Heart left ventricle (tissue), 16 donors: ENCODE measurements at regions of chr11 and their contacts with region 1.

Region 1: DNA sequence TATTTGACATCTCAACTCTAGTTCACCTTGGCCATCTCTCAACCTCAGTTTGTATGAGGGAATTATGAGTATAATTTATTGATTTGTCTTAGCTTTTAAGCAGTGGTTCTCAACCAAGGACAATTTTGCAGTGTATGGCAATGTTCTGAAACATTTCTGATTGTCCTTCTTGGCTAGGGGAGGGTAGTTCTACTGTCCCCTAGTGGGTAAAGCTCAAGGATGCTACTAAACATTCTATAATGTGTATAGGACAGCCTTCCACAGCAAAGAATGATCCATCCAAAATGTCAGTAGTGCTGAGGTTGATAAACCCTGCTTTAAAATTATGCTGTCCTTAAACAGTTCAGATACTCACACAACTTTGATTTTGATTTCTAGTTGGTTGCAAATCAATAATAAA is 78.1 kb upstream of the ALKBH3 start:
- DNase-seq: no peak
- ATAC-seq: no peak
- H3K4me3 ChIP-seq: no peak overlapping the region
- H3K27ac ChIP-seq: no peak overlapping the region
- H3K4me1 ChIP-seq: no peaks in the 10 kb centered on the region
- H3K27me3 ChIP-seq: no peaks in the 10 kb centered on the region
- CTCF ChIP-seq: peak in 5 of 12 donors; percentile 13 to 31 (median 16)
- POLR2A ChIP-seq: no peak

Region 2: DNA sequence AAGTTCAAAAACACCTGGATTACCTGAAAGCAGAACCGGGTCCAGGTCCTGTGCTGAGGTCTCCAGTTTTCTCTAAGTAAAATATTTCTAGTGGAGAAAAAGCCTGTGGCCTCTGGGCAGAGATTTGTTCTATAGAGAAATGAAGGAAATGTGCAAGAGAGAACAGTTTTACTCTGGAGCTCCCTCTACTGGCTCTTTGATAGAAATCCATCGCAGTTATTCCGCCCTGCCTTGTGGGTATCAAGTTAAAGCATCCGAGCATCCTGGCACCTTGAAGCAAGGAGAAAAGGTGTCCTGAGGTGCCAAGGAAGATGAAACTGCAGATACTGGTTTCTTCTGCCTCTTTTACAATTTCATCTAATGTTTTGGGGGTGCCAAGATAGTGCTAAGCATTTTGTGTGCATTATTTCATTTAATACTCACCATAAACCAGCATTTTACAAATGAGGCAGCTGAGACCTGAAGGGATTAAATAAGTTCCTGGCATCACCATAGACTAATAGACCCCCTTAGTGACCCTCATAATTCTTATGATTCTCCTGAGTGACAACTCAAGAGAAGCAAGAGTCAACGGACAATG is 235.0 kb before region 1 on chr11:
- intact Hi-C with region 1: loop called in 3 of 10 experiments (anchors 10 kb)
- DNase-seq: no peak
- ATAC-seq: peak in 1 of 4 donors; percentile 43
- H3K4me3 ChIP-seq: no peak overlapping the region
- H3K27ac ChIP-seq: no peak overlapping the region
- H3K4me1 ChIP-seq: no peaks in the 10 kb centered on the region
- H3K27me3 ChIP-seq: peaks cover 0 to 47% (median 7%) of the 10 kb centered on the region in 9 donors
- CTCF ChIP-seq: peak; percentile 57 to 79 (median 62)
- POLR2A ChIP-seq: no peak